ENCODE measurements at regions of chr17 and their contacts with region 1.

Region 1: GRCh38 chr17:82668631-82669099 is 20.4 kb upstream of the WDR45B start:
- DNase-seq: peak; percentile 73 to 86 (median 78)
- ATAC-seq: peak; percentile 95
- H3K4me3 ChIP-seq: no peak overlapping the region
- H3K27ac ChIP-seq: no peak overlapping the region
- H3K4me1 ChIP-seq: peaks cover 5% of the 10 kb centered on the region
- H3K27me3 ChIP-seq: no peaks in the 10 kb centered on the region
- CTCF ChIP-seq: peak; percentile 53 to 94 (median 81)
- POLR2A ChIP-seq: no peak

Region 2: GRCh38 chr17:82775001-82775823 is 106.5 kb after region 1 on chr17:
- intact Hi-C with region 1: loop called (anchors 5 kb)
- DNase-seq: peak; percentile 71 to 81 (median 76)
- ATAC-seq: peak; percentile 69
- H3K4me3 ChIP-seq: no peak overlapping the region
- H3K27ac ChIP-seq: no peak overlapping the region
- H3K4me1 ChIP-seq: peaks cover 8% of the 10 kb centered on the region
- H3K27me3 ChIP-seq: no peaks in the 10 kb centered on the region
- CTCF ChIP-seq: peak; percentile 75 to 93 (median 80)
- POLR2A ChIP-seq: no peak

Measured in body of pancreas (tissue), 4 donors.